B cell (primary cell): ENCODE measurements at regions of chr17 and their contacts with region 1.

Region 1: GRCh38 chr17:30906101-30906911 is at the start of gene TEFM:
- DNase-seq: peak; percentile 92
- ATAC-seq: peak; percentile 96
- H3K4me3 ChIP-seq: peak within 1 kb of the TSS; percentile 67 to 92 (median 88)
- H3K4me3 Mint-ChIP-seq: peak within 1 kb of the TSS; percentile 95
- H3K27ac ChIP-seq: peak within 1 kb of the TSS; percentile 78 to 88
- H3K27ac Mint-ChIP-seq: peak within 1 kb of the TSS; percentile 92
- H3K4me1 ChIP-seq: peaks cover 21 to 33% of the 10 kb centered on the region in 2 donors
- H3K4me1 Mint-ChIP-seq: peaks cover 36% of the 10 kb centered on the region
- H3K27me3 ChIP-seq: no peaks in the 10 kb centered on the region
- H3K27me3 Mint-ChIP-seq: no peaks in the 10 kb centered on the region
- CTCF ChIP-seq: no peak
- total RNA-seq, gene TEFM: 27.4 and 27.8 TPM in 2 replicates

Region 2: DNA sequence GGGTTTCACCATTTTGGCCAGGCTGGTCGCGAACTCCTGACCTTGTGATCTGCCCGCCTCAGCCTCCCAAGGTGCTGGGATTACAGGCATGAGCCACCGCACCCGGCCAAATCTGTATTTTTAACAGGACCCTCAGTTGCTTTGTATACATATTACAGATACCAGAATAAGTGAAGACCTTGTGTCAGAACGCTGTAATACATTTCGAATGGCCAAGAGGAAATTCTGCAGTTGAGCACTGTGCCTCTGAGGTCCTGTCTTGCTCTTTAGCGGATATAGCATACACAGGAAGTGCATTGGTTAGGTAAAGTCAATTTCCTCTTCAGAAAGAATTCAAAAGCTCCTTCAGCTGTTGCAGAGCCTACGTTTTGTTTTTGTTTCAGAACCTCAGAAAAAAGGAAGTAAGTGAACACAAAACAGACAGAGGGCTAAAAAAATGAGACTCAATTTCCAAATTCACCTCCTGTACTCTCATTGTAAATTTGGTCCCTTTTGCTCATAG is 97.5 kb before region 1 on chr17:
- CTCF ChIA-PET with region 1: interaction called, 3 read pairs
- POLR2A ChIA-PET with region 1: no interaction called
- intact Hi-C with region 1: loop called (anchors 1 kb)
- DNase-seq: peak; percentile 86
- ATAC-seq: peak; percentile 96
- H3K4me3 ChIP-seq: peak overlapping the region in 4 of 5 experiments; percentile 11 to 41 (median 30)
- H3K4me3 Mint-ChIP-seq: peak overlapping the region; percentile 87
- H3K27ac ChIP-seq: peak overlapping the region; percentile 73 to 84
- H3K27ac Mint-ChIP-seq: peak overlapping the region; percentile 97
- H3K4me1 ChIP-seq: peaks cover 59 to 73% of the 10 kb centered on the region in 2 donors
- H3K4me1 Mint-ChIP-seq: peaks cover 65% of the 10 kb centered on the region
- H3K27me3 ChIP-seq: no peaks in the 10 kb centered on the region
- H3K27me3 Mint-ChIP-seq: no peaks in the 10 kb centered on the region
- CTCF ChIP-seq: no peak

Region 3: GRCh38 chr17:30961209-30962188 is 55.2 kb after region 1 on chr17:
- CTCF ChIA-PET with region 1: no interaction called
- POLR2A ChIA-PET with region 1: no interaction called
- intact Hi-C with region 1: loop called (anchors 2 kb)
- DNase-seq: peak; percentile 84
- ATAC-seq: peak; percentile 77
- H3K4me3 ChIP-seq: peak overlapping the region; percentile 10 to 66 (median 38)
- H3K4me3 Mint-ChIP-seq: peak overlapping the region; percentile 65
- H3K27ac ChIP-seq: peak overlapping the region; percentile 57 to 84
- H3K27ac Mint-ChIP-seq: peak overlapping the region; percentile 85
- H3K4me1 ChIP-seq: peaks cover 52 to 61% of the 10 kb centered on the region in 2 donors
- H3K4me1 Mint-ChIP-seq: peaks cover 59% of the 10 kb centered on the region
- H3K27me3 ChIP-seq: no peaks in the 10 kb centered on the region
- H3K27me3 Mint-ChIP-seq: no peaks in the 10 kb centered on the region
- CTCF ChIP-seq: no peak

Region 4: GRCh38 chr17:31008374-31009041 is 102.2 kb after region 1 on chr17:
- CTCF ChIA-PET with region 1: no interaction called
- POLR2A ChIA-PET with region 1: no interaction called
- intact Hi-C with region 1: loop called (anchors 1 kb)
- DNase-seq: peak; percentile 75
- ATAC-seq: peak; percentile 79
- H3K4me3 ChIP-seq: peak overlapping the region; percentile 47 to 86 (median 69)
- H3K4me3 Mint-ChIP-seq: peak overlapping the region; percentile 96
- H3K27ac ChIP-seq: peak overlapping the region; percentile 41 to 77
- H3K27ac Mint-ChIP-seq: peak overlapping the region; percentile 95
- H3K4me1 ChIP-seq: peaks cover 3 to 12% of the 10 kb centered on the region in 2 donors
- H3K4me1 Mint-ChIP-seq: peaks cover 24% of the 10 kb centered on the region
- H3K27me3 ChIP-seq: no peaks in the 10 kb centered on the region
- H3K27me3 Mint-ChIP-seq: no peaks in the 10 kb centered on the region
- CTCF ChIP-seq: no peak

Region 5: DNA sequence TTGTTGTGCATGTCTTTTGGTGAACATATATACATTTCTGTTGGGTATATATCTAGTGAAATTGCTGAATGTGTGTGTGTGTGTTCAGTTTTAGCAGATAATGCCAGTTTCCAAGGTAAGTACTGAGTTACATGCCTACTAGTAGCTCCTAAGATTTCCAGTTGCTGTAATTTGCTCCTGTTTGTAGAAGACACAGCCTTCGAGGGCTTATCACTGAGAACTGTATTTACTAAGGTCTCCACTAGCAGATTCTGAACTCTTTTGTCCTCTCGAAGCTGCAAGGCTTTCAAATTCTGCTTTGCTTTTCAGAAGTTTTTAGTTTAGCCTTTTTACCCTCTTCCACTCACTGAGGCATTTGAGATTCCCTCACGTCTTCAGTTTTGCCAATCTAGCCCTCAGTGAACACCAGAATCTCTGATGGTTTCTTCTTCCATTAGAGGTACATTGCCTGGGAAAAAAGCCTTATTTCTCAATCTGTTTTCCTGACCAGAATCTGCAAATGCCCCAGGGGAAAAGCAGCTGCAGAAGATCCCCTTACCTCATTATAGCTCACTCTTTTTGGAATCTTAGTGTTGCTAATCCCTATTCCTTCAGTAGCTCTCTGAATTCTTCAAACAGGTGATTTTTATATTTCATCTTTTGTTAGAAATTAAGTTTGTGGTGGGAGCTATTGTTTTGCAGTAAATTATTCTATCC is 241.3 kb after region 1 on chr17:
- CTCF ChIA-PET with region 1: no interaction called
- POLR2A ChIA-PET with region 1: no interaction called
- intact Hi-C with region 1: no loop called
- DNase-seq: no peak
- ATAC-seq: no peak
- H3K4me3 ChIP-seq: no peak overlapping the region
- H3K4me3 Mint-ChIP-seq: no peak overlapping the region
- H3K27ac ChIP-seq: no peak overlapping the region
- H3K27ac Mint-ChIP-seq: no peak overlapping the region
- H3K4me1 ChIP-seq: no peaks in the 10 kb centered on the region
- H3K4me1 Mint-ChIP-seq: no peaks in the 10 kb centered on the region
- H3K27me3 ChIP-seq: no peaks in the 10 kb centered on the region
- H3K27me3 Mint-ChIP-seq: no peaks in the 10 kb centered on the region
- CTCF ChIP-seq: no peak